GM12878 (cell line): ENCODE measurements at regions of chr9 and their contacts with region 1.

Region 1: GRCh38 chr9:124708633-124709291 is 62.3 kb downstream of the NR6A1 start:
- DNase-seq: no peak
- ATAC-seq: no peak
- H3K4me3 ChIP-seq: no peak overlapping the region
- H3K27ac ChIP-seq: no peak overlapping the region
- H3K4me1 ChIP-seq: no peaks in the 10 kb centered on the region; the same call in 1 of the 2 replicates
- H3K27me3 ChIP-seq: no peaks in the 10 kb centered on the region
- CTCF ChIP-seq: no peak
- EP300 ChIP-seq: no peak
- POLR2A ChIP-seq: no peak
- RAD21 ChIP-seq: no peak

Region 2: GRCh38 chr9:124420991-124421543 is 287.7 kb before region 1 on chr9:
- CTCF ChIA-PET with region 1: interaction called, 3 read pairs
- POLR2A ChIA-PET with region 1: no interaction called
- RAD21 ChIA-PET with region 1: no interaction called
- SMC1A ChIA-PET with region 1: no interaction called
- in situ Hi-C with region 1: no loop called
- intact Hi-C with region 1: loop called (anchors 1 kb)
- DNase-seq: no peak
- ATAC-seq: no peak
- H3K4me3 ChIP-seq: no peak overlapping the region
- H3K27ac ChIP-seq: no peak overlapping the region
- H3K4me1 ChIP-seq: peaks cover 9% of the 10 kb centered on the region
- H3K27me3 ChIP-seq: no peaks in the 10 kb centered on the region
- CTCF ChIP-seq: no peak
- EP300 ChIP-seq: no peak
- POLR2A ChIP-seq: no peak
- RAD21 ChIP-seq: no peak

Region 3: GRCh38 chr9:124574534-124575341 is 134.0 kb before region 1 on chr9:
- CTCF ChIA-PET with region 1: interaction called, 11 read pairs
- POLR2A ChIA-PET with region 1: no interaction called
- RAD21 ChIA-PET with region 1: no interaction called
- SMC1A ChIA-PET with region 1: interaction called, 3 read pairs
- in situ Hi-C with region 1: no loop called
- intact Hi-C with region 1: no loop called
- DNase-seq: no peak
- ATAC-seq: no peak
- H3K4me3 ChIP-seq: no peak overlapping the region
- H3K27ac ChIP-seq: no peak overlapping the region
- H3K4me1 ChIP-seq: no peaks in the 10 kb centered on the region
- H3K27me3 ChIP-seq: no peaks in the 10 kb centered on the region
- CTCF ChIP-seq: no peak
- EP300 ChIP-seq: no peak
- POLR2A ChIP-seq: no peak
- RAD21 ChIP-seq: no peak

Region 4: DNA sequence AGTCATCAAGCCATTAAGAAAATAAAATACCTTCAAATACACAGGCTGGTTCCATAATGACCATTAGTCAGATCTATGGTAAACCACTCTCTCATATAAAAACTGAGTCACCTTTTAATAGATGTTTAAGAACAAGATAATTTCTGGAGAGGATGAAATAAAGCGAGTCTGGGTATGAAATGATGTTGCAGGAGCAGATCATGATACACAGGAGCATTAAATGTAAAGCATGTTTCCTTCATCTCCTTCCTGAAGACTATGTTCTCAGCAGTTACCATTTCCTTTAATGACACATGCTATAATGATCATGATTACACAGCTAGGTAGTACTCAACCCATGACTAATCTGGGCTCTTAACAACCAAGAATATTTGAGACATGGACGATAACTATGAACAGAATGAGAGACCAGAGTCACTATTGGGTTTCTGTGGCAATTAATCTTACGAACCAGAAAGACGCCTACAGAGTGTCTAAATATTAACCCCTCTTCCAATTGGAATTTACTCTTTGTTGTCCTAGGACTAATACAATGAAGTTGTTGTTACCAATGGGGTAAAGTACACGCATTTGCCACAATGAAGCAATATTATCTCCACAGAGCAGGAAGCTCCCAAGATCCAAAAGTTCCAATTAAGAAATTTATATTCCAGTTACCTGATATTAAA is 43.2 kb before region 1 on chr9:
- CTCF ChIA-PET with region 1: interaction called, 83 read pairs
- POLR2A ChIA-PET with region 1: no interaction called
- RAD21 ChIA-PET with region 1: interaction called, 68 read pairs
- SMC1A ChIA-PET with region 1: interaction called, 76 read pairs
- in situ Hi-C with region 1: no loop called
- intact Hi-C with region 1: no loop called
- DNase-seq: no peak
- ATAC-seq: peak; percentile 12; the same call in 2 of the 3 replicates
- H3K4me3 ChIP-seq: no peak overlapping the region
- H3K27ac ChIP-seq: no peak overlapping the region
- H3K4me1 ChIP-seq: no peaks in the 10 kb centered on the region
- H3K27me3 ChIP-seq: no peaks in the 10 kb centered on the region
- CTCF ChIP-seq: no peak
- EP300 ChIP-seq: no peak
- POLR2A ChIP-seq: no peak
- RAD21 ChIP-seq: no peak

Region 5: GRCh38 chr9:124735121-124735520 is 26.4 kb after region 1 on chr9:
- CTCF ChIA-PET with region 1: interaction called, 10 read pairs
- POLR2A ChIA-PET with region 1: interaction called, 3 read pairs
- RAD21 ChIA-PET with region 1: no interaction called
- SMC1A ChIA-PET with region 1: interaction called, 4 read pairs
- in situ Hi-C with region 1: no loop called
- intact Hi-C with region 1: no loop called
- DNase-seq: no peak
- ATAC-seq: peak; percentile 71
- H3K4me3 ChIP-seq: no peak overlapping the region
- H3K27ac ChIP-seq: no peak overlapping the region
- H3K4me1 ChIP-seq: peaks cover 9% of the 10 kb centered on the region
- H3K27me3 ChIP-seq: no peaks in the 10 kb centered on the region
- CTCF ChIP-seq: no peak
- EP300 ChIP-seq: no peak
- POLR2A ChIP-seq: no peak
- RAD21 ChIP-seq: no peak

Region 6: GRCh38 chr9:124852829-124853531 is 144.2 kb after region 1 on chr9 and contains the start of gene WDR38:
- CTCF ChIA-PET with region 1: interaction called, 5 read pairs
- POLR2A ChIA-PET with region 1: no interaction called
- RAD21 ChIA-PET with region 1: interaction called, 4 read pairs
- SMC1A ChIA-PET with region 1: interaction called, 3 read pairs
- in situ Hi-C with region 1: no loop called
- intact Hi-C with region 1: loop called (anchors 2 kb)
- DNase-seq: no peak
- ATAC-seq: peak; percentile 91
- H3K4me3 ChIP-seq: peak within 1 kb of the TSS; percentile 51; the same call in 1 of the 2 replicates
- H3K27ac ChIP-seq: no peak within 1 kb of the TSS
- H3K4me1 ChIP-seq: peaks cover 5% of the 10 kb centered on the region
- H3K27me3 ChIP-seq: no peaks in the 10 kb centered on the region
- CTCF ChIP-seq: peak; percentile 82 to 98 (median 87)
- EP300 ChIP-seq: no peak
- POLR2A ChIP-seq: no peak
- RAD21 ChIP-seq: peak; percentile 79
- polyA plus RNA-seq, gene WDR38: not detected

Region 7: GRCh38 chr9:125233678-125234077 is 524.9 kb after region 1 on chr9:
- CTCF ChIA-PET with region 1: no interaction called
- POLR2A ChIA-PET with region 1: no interaction called
- RAD21 ChIA-PET with region 1: no interaction called
- SMC1A ChIA-PET with region 1: no interaction called
- in situ Hi-C with region 1: no loop called
- intact Hi-C with region 1: no loop called
- DNase-seq: no peak
- ATAC-seq: no peak
- H3K4me3 ChIP-seq: no peak overlapping the region
- H3K27ac ChIP-seq: no peak overlapping the region
- H3K4me1 ChIP-seq: peaks cover 4% of the 10 kb centered on the region; the same call in 1 of the 2 replicates
- H3K27me3 ChIP-seq: no peaks in the 10 kb centered on the region
- CTCF ChIP-seq: no peak
- EP300 ChIP-seq: no peak
- POLR2A ChIP-seq: no peak
- RAD21 ChIP-seq: no peak